Activated CD8-positive, alpha-beta memory T cell treated with anti-CD3 and anti-CD28 coated beads, Interleukin-2, amount 10 ng/mL, durations not matched to agents 7 days and 5 days (primary cell): ENCODE measurements at regions of chr1 and their contacts with region 1.

Region 1: DNA sequence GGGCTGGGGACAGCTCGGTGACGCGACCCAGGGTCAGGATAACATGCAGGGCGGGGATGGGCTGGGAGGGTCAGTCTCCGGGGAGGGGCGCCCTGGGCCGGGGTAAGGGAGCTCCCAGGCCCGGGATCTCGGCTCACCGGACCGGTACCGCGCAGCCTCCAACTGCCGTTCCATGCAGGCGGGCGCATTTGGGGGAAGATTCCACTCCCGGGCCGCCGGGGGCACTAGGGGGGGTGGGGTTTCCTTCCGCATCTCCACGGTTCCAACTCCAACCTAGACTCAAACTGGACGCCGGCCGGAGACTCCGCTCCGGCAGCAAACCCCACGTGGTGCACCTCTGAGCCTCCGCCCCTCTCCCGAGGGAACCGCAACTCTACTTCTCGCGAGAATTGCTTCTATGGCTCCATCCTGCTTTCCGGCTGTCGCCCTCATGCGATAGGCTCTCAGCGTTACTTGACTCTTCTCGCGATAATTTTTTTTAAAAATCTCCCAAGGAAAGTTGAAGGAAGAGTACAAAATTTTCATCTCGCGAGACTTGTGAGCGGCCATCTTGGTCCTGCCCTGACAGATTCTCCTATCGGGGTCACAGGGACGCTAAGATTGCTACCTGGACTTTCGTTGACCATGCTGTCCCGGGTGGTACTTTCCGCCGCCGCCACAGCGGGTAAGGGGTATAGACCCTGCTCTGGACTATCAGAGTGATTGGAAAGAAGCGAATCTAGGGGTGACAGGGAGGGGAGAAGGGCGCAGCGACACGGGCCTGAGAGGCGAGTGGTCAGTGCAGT is at the starts of genes ATP5PB and WDR77:
- DNase-seq: peak; percentile 97
- ATAC-seq: peak; percentile 96
- H3K4me3 Mint-ChIP-seq: peak within 1 kb of the TSS; percentile 98
- H3K27ac Mint-ChIP-seq: peak within 1 kb of the TSS; percentile 94
- H3K4me1 Mint-ChIP-seq: peaks cover 73% of the 10 kb centered on the region
- H3K27me3 Mint-ChIP-seq: no peaks in the 10 kb centered on the region
- total RNA-seq, gene ATP5PB: 215 to 266 TPM
- total RNA-seq, gene WDR77: 29.6 to 37.5 TPM

Region 2: DNA sequence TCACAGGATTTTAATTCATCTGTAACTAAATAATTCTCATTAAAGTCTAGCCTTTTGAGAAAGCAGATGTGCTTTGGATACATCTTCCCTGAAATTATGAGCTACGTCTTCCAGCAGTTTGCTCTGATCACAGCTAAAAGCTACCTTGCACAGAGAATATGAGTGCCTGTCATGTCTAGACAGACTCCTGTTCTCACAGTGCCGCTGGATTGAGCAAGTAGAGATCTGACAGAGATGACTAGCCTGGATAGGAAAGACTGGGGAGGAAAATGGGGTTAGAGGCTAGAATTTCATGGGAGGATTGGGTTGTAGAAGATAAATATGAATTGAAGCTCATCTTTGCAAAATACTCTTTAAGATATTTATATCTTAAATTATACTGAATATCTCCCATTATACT is 285.0 kb before region 1 on chr1:
- CTCF ChIA-PET with region 1: no interaction called
- DNase-seq: no peak
- ATAC-seq: no peak
- H3K4me3 Mint-ChIP-seq: no peak overlapping the region
- H3K27ac Mint-ChIP-seq: no peak overlapping the region
- H3K4me1 Mint-ChIP-seq: peaks cover 4% of the 10 kb centered on the region
- H3K27me3 Mint-ChIP-seq: no peaks in the 10 kb centered on the region

Region 3: DNA sequence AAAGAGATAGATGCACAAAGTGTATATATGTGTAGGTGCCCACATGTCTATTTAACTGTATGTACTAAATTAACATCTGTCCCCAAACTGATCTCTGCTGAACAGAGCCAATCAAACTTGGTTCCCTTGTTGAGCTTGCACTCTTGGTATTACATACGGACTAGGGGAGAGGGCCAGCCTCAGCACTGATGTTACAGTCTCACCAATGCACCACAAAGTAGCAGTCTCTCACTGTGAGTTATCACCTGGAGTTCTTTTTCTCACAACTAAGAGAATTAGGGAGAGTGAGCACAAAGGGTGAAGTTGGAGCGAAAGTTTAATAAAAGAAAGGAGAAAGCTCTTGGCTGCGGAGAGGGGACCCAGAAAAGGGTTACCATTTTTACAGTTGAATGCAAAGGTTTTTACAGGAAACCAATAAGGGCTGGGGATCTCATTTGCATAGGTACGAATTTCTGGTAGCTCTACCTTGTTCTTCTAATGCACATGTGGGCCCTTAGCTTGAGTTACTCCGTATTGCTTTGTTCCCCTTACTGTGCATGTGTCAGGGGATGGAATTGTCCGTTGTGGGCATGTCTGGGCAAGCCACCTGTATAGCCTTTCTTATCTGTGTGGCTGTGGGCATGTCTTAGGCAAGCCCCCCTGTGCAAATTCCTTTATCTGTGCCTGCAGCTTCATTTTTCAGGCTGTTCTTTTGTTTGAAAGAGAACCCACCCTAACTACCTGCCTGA is 234.9 kb before region 1 on chr1:
- CTCF ChIA-PET with region 1: interaction called, 13 read pairs
- DNase-seq: no peak
- ATAC-seq: peak; percentile 0
- H3K4me3 Mint-ChIP-seq: peak overlapping the region; percentile 71
- H3K27ac Mint-ChIP-seq: peak overlapping the region; percentile 91
- H3K4me1 Mint-ChIP-seq: peaks cover 69% of the 10 kb centered on the region
- H3K27me3 Mint-ChIP-seq: no peaks in the 10 kb centered on the region

Region 4: DNA sequence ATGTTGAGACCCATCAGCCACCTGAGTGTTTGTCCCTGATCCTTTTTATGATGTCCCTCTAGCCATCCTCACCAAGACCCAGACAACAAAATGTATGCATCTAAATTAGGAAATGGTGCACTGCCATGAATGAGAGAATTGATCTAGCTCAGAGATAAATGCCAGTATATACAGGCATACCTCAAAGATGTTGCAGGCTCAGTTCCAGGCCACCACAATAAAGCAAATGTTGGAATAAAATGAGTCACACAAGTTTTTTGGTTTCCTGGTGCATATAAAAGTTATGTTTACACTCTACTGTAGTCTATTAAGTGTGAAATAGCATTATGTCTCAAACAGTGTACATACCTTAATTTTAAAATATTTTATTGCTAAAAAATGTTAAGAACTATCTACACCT is 94.5 kb before region 1 on chr1:
- CTCF ChIA-PET with region 1: no interaction called
- DNase-seq: no peak
- ATAC-seq: peak; percentile 33
- H3K4me3 Mint-ChIP-seq: no peak overlapping the region
- H3K27ac Mint-ChIP-seq: no peak overlapping the region
- H3K4me1 Mint-ChIP-seq: peaks cover 10% of the 10 kb centered on the region
- H3K27me3 Mint-ChIP-seq: peaks cover 4% of the 10 kb centered on the region